ENCODE measurements at regions of chr5 and their contacts with region 1.

Region 1: DNA sequence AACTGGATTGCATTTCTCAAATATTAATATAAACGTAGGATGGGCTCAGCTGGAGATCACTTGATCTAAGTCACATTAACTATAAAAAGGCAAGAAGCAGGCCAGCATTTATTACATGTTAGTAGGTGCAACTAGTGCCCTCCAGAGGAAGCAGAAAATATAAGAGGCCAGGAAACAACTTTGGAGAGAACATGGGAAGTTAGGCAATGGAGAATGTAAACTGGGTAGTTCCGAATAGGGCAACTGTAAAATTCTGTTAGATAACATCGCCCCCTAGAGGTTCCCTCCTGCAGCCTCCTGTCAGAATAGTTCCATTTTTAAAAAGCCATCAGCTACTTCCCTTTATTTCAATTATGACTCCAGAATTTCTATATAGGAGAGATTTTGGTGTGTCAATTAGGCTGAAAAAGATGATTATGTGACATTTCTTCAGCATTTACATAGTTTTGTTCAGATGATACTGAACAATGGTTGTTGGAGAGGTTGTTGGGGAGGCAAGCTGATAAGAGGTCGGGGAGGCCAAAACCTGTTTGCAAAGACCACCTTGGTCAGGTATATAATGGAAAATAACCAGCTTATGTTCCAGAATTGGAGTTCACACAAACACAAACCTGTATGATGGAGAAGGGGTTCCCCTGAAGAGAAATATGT is 22.4 kb downstream of the CCL28 start:
- DNase-seq: peak in 1 of 2 donors; percentile 59
- ATAC-seq: peak; percentile 87
- H3K4me3 ChIP-seq: no peak overlapping the region
- H3K27ac ChIP-seq: no peak overlapping the region
- H3K4me1 ChIP-seq: no peaks in the 10 kb centered on the region
- H3K27me3 ChIP-seq: no peaks in the 10 kb centered on the region

Region 2: DNA sequence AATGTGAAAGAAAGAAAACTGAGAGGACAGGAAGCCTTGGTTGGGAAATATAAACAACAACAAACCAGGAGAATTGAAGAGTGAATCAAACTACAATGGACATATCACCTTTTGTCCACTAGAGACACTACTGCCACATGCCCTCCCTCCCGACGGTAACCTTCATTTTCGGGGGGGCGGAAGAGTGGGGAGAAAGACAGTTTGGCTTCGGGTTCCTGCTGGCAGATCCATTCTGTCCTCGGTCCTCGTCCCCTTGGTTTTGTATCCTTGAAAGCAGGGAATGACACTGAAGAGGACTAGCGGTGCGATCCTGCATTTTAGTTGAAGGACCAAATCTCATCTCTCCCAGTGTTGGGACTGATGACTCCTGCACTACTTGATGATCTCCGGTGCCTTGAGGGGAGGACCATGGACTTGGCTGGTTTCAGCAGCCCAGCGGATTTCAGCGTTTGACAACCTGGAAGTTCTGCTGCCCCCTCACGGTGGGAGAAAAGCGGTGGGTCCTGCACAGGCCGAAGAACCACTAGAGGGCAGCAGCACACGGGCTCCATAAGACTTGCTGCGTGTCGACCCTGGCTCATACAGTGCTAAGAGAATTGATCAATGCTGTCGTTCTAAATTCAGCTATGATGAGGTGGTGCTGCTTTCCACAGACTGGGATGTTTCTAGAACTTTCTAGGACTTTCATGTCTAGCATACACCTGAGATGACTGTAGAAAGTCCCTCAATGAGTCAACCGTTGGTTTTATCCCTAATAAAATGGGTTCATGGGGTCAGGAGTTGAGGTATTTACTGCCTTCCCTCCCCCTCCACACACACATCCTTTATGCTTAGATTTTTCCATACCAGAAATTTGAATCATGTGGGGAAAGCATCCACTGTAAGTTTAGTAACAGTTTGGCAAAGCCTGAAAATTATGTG is 284.2 kb before region 1 on chr5:
- intact Hi-C with region 1: loop called in 1 of 2 experiments (anchors 10 kb)
- DNase-seq: peak; percentile 93 to 96
- ATAC-seq: peak; percentile 98
- H3K4me3 ChIP-seq: peak overlapping the region in 1 of 2 donors; percentile 25
- H3K27ac ChIP-seq: no peak overlapping the region
- H3K4me1 ChIP-seq: no peaks in the 10 kb centered on the region
- H3K27me3 ChIP-seq: no peaks in the 10 kb centered on the region

Region 3: GRCh38 chr5:43336159-43336558 is 53.6 kb before region 1 on chr5:
- intact Hi-C with region 1: no loop called
- DNase-seq: no peak
- ATAC-seq: no peak
- H3K4me3 ChIP-seq: no peak overlapping the region
- H3K27ac ChIP-seq: no peak overlapping the region
- H3K4me1 ChIP-seq: no peaks in the 10 kb centered on the region
- H3K27me3 ChIP-seq: no peaks in the 10 kb centered on the region